ENCODE measurements at regions of chr10 and their contacts with region 1.

Region 1: DNA sequence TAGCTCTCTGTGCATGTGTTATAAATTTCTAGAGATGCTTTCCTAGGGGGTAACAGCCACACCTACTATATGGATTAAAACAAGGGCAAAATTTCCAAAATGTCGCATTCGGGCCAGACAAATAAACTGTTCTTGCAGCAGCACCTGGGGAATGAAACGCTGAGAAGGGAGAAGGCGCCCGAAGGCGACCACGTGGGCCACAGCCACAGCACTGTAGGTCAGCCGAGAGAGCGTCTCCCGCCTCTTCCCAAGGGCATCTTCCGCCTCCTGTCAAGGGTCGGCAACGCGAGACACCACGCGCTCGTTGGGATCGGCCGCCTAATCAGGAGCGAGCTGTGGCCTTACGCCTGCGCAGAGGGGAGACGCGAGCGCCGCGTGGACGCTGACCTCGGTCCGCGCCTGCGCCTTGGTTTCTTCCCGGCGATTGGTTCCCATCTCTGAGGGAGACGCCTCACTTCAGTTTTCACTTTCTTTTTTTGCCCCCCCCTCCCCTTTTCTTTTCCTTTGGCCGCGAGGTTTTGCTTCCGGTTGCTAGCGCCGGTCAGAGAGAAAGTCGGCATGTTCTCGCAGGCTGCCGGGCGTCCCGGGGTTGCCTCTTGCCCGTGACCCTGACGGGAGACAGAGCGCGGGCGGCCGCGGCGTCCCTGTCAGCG is at the start of gene TASOR2:
- DNase-seq: peak; percentile 99
- H3K4me3 Mint-ChIP-seq: peak within 1 kb of the TSS; percentile 99
- H3K27ac Mint-ChIP-seq: peak within 1 kb of the TSS; percentile 98
- H3K4me1 Mint-ChIP-seq: peaks cover 45% of the 10 kb centered on the region
- H3K27me3 Mint-ChIP-seq: peaks cover 11% of the 10 kb centered on the region
- total RNA-seq, gene TASOR2: 78.2 and 92.3 TPM in 2 replicates

Region 2: GRCh38 chr10:5446390-5446926 is 238.0 kb before region 1 on chr10:
- intact Hi-C with region 1: loop called (anchors 5 kb)
- DNase-seq: peak; percentile 94
- H3K4me3 Mint-ChIP-seq: peak overlapping the region; percentile 94
- H3K27ac Mint-ChIP-seq: peak overlapping the region; percentile 89
- H3K4me1 Mint-ChIP-seq: peaks cover 50% of the 10 kb centered on the region
- H3K27me3 Mint-ChIP-seq: no peaks in the 10 kb centered on the region

Region 3: DNA sequence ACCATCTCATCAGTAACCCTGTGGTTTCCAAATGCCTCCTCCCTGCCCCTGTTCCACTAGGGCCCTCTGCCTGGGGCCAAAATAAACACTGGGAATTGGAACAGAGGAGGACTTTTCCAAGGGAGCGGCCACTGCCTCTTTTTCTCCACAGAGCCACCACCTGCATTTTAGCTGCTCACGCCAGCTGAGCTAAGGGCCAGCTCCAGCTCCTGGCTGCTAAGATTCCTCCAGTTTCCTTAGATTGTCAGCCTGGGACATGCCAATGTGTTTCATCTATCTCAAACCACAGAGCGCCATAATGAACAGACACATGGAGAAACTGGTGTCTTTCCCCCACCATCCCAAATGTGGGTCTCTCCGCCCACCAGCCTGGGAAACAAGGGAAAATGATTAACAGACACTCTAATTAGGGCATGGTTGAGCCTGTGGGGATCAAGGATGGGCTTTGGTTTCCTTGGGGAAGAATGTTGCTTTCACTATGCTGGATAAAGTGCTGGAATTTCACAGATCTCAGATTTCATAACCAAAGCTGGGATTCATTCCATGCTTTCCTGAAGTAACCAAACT is 70.2 kb before region 1 on chr10:
- intact Hi-C with region 1: no loop called
- DNase-seq: no peak
- H3K4me3 Mint-ChIP-seq: no peak overlapping the region
- H3K27ac Mint-ChIP-seq: no peak overlapping the region
- H3K4me1 Mint-ChIP-seq: no peaks in the 10 kb centered on the region
- H3K27me3 Mint-ChIP-seq: peaks cover 2% of the 10 kb centered on the region

Region 4: DNA sequence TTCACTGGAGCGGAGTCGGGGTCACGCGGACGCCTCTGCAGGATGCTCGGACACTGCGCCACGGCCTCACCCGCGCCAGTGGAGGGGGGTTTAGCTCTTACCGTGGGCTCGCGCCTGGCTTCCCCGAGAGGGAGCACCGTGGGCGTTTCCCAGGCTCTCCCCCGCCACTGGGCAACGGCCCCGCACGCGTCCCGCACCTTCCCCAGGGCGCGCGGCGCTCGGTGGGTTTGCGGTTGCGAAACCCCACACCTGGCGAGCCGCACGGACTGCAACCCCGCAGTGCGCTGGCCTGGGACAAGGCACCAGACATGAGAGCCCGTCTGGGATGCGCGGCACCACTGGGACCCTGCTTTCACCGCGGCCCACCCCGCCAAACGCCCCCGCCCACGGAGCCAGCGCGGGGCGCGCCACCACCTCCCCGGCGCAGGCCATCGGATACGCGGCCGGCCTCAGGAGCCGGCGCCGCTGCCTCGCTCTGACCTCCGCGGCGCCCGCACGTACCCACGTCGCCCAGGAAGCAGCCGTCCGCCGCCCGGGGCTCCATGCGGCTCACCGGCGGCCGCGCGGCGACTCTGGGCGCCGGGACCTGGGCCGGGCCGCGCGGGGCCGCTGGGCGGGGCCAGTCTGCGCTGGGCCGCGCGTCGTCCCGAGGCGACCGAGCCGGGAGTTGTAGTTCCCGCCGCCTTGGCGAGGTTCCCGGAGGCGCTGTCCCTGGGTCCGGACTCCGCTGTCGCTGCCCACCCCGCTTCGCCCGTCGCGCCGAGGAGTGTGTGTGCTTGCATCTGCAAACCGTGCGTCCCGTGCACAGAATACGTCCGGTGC is 18.2 kb before region 1 on chr10 and contains the start of gene ASB13:
- intact Hi-C with region 1: loop called (anchors 1 kb)
- DNase-seq: peak; percentile 83
- H3K4me3 Mint-ChIP-seq: peak within 1 kb of the TSS; percentile 88
- H3K27ac Mint-ChIP-seq: peak within 1 kb of the TSS; percentile 82
- H3K4me1 Mint-ChIP-seq: peaks cover 10% of the 10 kb centered on the region
- H3K27me3 Mint-ChIP-seq: peaks cover 20% of the 10 kb centered on the region
- total RNA-seq, gene ASB13: 13.5 and 14.5 TPM in 2 replicates

Region 5: DNA sequence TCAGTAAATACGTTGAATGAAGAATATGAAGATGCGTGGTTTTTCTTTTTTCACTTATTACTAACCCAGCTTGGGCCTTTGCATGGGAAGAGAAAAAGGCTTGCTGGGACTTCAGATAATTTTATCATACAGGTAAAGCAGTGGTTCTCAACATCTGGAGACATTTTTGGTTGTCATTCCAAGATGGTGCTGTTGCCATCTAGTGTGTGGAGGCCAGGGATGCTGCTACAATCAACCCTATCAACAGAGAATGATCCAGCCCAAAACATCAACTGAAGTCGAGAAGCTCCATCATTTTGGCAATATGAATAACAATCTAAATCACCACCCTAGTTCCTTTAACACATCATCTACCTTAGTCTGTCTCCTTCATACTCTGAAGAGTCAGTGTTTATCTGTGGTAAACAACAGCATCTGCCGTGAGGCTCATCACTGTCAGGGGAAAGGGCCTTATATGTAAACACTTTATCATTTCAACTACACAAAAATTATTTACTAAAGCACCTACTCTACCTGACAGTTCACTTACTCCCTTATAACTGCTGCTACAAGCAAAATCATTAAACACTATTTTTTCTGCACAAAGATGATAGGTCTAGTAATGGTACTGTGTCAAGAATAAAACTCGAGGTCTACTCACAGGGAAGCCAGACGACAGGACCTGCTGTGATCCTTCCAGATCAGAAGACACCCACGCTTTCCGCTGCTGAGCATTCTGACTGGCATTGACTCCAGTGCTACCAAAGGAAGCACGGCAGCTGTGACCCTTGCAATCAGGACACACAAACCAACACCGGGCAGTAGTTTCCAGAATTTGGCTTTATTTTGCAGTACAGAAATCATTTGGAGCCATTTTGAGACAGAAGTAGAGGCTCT is 80.2 kb after region 1 on chr10:
- intact Hi-C with region 1: loop called (anchors 5 kb)
- DNase-seq: no peak
- H3K4me3 Mint-ChIP-seq: no peak overlapping the region
- H3K27ac Mint-ChIP-seq: peak overlapping the region; percentile 84
- H3K4me1 Mint-ChIP-seq: peaks cover 11% of the 10 kb centered on the region
- H3K27me3 Mint-ChIP-seq: no peaks in the 10 kb centered on the region

Region 6: GRCh38 chr10:5873515-5873995 is 189.1 kb after region 1 on chr10:
- intact Hi-C with region 1: loop called (anchors 5 kb)
- DNase-seq: peak; percentile 91
- H3K4me3 Mint-ChIP-seq: peak overlapping the region; percentile 39
- H3K27ac Mint-ChIP-seq: no peak overlapping the region
- H3K4me1 Mint-ChIP-seq: peaks cover 5% of the 10 kb centered on the region
- H3K27me3 Mint-ChIP-seq: no peaks in the 10 kb centered on the region